GM18951 (cell line): ENCODE measurements at regions of chr12 and their contacts with region 1.

Region 1: DNA sequence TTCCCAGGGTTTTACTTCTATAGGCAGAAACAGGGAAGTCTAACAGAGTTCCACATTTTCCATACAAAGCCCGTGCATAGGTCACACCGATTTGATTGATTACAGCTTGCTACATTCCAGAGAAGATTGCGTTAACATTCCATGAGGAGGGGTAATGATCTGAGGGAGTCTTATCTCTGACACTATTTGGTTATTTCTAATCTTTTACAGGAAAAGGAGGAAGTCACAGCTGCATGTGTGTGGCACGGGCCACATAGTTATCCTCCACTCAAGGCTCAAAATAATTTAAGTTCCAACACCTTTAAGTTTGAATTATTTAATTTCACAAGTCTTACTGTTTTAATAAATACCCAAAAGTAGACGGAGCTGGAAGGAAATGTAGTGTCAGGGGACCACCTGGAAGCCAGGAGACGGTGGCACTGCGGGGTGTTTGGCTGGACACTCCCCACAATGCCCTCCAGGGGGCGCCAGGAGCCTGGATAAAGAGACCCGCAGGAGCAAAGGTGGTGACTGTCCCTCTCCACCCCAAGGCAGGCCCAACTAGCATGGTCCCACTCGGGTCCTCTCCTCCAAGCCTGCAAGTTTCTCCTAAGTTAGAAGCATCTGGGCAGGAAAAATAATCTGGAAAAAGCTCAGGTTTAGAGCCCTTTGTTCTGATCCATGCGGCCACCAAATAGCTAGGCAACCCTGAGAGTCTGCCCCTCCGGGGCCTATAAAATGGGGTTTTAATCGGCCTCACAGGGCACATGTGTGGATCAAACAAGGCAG is 20.2 kb downstream of the KRT8 start:
- POLR2A ChIP-seq: no peak

Region 2: DNA sequence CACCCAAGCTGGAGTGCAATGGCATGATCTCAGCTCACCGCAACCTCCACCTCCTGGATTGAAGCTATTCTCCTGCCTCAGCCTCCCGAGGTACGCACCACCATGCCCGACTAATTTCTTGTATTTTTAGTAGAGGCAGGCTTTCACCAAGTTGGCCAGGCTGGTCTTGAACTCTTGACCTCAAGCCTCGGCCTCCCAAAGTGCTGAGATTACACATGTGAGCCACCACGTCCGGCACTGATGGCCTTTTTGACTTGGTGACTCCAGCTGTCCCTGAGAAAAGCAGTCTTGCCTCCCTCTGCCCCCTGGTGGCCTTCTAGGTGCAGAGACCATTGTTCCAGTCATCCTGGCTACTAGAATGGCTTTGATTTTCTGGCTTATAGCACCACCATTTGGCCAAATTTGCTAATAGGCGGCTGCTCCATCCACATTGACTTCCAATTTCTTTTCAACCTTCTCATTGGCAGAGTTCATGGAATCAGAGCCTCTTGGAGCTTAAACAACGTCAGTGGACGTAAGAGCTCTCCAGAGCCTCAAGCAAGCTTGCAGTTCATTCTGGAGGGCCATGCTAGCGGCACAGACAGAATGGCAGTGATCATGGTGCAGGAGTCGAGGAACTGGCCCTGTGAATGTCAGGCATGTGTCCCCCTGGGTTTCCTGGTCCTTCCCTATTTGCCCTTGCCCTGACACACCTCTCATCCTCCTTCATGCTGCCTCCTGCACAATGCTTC is 96.1 kb after region 1 on chr12:
- in situ Hi-C with region 1: loop called (anchors 5 kb)
- POLR2A ChIP-seq: no peak